GM13977 (cell line): ENCODE measurements at regions of chr9 and their contacts with region 1.

Region 1: DNA sequence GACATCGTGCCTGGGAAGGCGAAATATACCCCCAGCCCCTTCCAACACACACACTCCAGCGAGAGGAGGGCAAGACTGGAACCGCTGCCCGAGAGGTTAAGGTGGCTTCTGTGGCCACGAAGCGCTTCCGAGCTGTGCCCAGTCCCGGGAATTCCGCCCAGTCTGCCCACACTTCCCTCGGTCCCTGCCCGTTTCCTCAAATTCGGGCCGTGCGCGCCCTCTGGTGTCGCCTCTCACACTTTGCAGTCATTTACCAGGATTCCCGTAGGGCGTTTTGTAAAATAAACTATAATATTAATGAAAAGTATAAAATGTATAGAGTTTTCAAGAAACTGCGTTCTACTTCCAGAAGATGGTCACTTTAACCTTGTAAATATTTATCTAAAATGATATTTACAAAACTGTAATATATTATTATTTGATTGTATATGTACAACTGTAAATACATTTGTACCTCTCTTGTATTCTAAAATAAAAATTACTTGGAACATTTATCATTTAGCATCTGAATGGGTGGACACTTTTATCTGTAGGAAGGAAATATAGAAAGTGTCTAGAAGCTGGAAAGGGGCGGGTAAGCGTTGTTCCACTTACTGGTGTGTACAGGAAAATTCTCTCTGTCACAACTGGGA is 11.0 kb upstream of the EXOSC2 start:
- DNase-seq: peak; percentile 81
- CTCF ChIP-seq: peak; percentile 90

Region 2: GRCh38 chr9:130290291-130291181 is 392.1 kb before region 1 on chr9:
- in situ Hi-C with region 1: no loop called
- DNase-seq: no peak
- CTCF ChIP-seq: no peak

Region 3: GRCh38 chr9:130320723-130321481 is 361.7 kb before region 1 on chr9:
- in situ Hi-C with region 1: no loop called
- DNase-seq: no peak
- CTCF ChIP-seq: no peak

Region 4: GRCh38 chr9:130426883-130427282 is 255.7 kb before region 1 on chr9:
- in situ Hi-C with region 1: no loop called
- DNase-seq: no peak
- CTCF ChIP-seq: no peak

Region 5: GRCh38 chr9:130451509-130452388 is 230.9 kb before region 1 on chr9:
- in situ Hi-C with region 1: loop called (anchors 10 kb)
- DNase-seq: no peak
- CTCF ChIP-seq: peak; percentile 19

Region 6: DNA sequence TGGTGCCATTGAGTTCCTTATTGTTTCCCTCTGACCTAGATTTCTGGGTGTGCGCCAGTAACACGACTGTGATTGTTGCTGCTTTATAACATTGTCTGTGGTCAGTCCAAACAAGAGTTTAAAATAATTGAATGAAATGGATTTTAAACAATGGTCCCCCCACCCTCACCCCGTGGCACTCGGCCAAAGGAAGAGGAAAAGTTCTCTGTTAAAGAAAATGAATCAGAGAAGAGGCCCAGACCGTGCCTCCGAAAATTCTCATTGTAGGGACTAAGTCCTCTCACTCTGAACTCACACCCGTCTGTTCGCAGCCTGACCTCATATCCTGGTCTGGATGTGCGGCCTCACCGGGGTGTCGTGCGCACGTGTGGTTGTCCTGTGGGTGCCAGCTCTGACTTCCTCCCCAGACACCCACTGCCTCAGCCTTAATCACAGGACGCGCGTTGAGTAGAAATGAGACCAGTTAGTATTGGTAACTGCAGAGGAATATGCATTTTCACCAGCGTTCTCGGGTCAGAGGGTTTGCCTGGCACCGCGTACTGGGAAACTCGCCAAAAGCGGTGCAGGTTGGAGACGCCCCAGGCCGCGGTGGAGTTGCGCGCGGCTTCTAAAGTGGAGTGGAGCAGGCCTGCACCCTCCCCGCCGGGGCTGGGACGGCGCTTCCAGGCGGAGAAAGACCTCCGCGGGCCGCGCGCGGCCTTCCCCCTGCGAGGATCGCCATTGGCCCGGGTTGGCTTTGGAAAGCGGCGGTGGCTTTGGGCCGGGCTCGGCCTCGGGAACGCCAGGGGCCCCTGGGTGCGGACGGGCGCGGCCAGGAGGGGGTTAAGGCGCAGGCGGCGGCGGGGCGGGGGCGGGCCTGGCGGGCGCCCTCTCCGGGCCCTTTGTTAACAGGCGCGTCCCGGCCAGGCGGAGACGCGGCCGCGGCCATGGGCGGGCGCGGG is 152.0 kb after region 1 on chr9 and contains the start of gene ABL1:
- in situ Hi-C with region 1: no loop called
- DNase-seq: peak; percentile 89
- CTCF ChIP-seq: no peak